Head of caudate nucleus (tissue), 42 donors: ENCODE measurements at regions of chr7 and their contacts with region 1.

Region 1: GRCh38 chr7:16071246-16071857 is 350.0 kb downstream of the CRPPA start:
- DNase-seq: peak in 12 of 42 donors; percentile 8 to 55 (median 24)

Region 2: GRCh38 chr7:16564909-16565426 is 493.6 kb after region 1 on chr7:
- intact Hi-C with region 1: loop called (anchors 10 kb)
- DNase-seq: peak in 7 of 42 donors; percentile 15 to 44 (median 22)